ENCODE measurements at regions of chr1 and their contacts with region 1.

Region 1: GRCh38 chr1:172532700-172533509 is at the start of gene SUCO:
- DNase-seq: peak; percentile 100
- H3K4me3 Mint-ChIP-seq: peak within 1 kb of the TSS; percentile 94
- H3K27ac Mint-ChIP-seq: peak within 1 kb of the TSS; percentile 100
- H3K4me1 Mint-ChIP-seq: peaks cover 39% of the 10 kb centered on the region
- H3K27me3 Mint-ChIP-seq: no peaks in the 10 kb centered on the region
- total RNA-seq, gene SUCO: 23.9 TPM

Region 2: GRCh38 chr1:171781176-171781875 is 751.6 kb before region 1 on chr1 and contains the start of gene METTL13:
- CTCF ChIA-PET with region 1: no interaction called
- intact Hi-C with region 1: loop called (anchors 1 kb)
- DNase-seq: peak; percentile 99
- H3K4me3 Mint-ChIP-seq: peak within 1 kb of the TSS; percentile 100
- H3K27ac Mint-ChIP-seq: peak within 1 kb of the TSS; percentile 98
- H3K4me1 Mint-ChIP-seq: peaks cover 49% of the 10 kb centered on the region
- H3K27me3 Mint-ChIP-seq: no peaks in the 10 kb centered on the region
- total RNA-seq, gene METTL13: 39.5 to 40.9 TPM

Region 3: GRCh38 chr1:172443626-172444453 is 89.1 kb before region 1 on chr1 and contains the start of gene PIGC:
- CTCF ChIA-PET with region 1: interaction called, 3 read pairs
- intact Hi-C with region 1: loop called (anchors 1 kb)
- DNase-seq: peak; percentile 96
- H3K4me3 Mint-ChIP-seq: peak within 1 kb of the TSS; percentile 86
- H3K27ac Mint-ChIP-seq: peak within 1 kb of the TSS; percentile 86
- H3K4me1 Mint-ChIP-seq: peaks cover 35% of the 10 kb centered on the region
- H3K27me3 Mint-ChIP-seq: no peaks in the 10 kb centered on the region
- total RNA-seq, gene PIGC: 17.5 to 18.7 TPM

Region 4: DNA sequence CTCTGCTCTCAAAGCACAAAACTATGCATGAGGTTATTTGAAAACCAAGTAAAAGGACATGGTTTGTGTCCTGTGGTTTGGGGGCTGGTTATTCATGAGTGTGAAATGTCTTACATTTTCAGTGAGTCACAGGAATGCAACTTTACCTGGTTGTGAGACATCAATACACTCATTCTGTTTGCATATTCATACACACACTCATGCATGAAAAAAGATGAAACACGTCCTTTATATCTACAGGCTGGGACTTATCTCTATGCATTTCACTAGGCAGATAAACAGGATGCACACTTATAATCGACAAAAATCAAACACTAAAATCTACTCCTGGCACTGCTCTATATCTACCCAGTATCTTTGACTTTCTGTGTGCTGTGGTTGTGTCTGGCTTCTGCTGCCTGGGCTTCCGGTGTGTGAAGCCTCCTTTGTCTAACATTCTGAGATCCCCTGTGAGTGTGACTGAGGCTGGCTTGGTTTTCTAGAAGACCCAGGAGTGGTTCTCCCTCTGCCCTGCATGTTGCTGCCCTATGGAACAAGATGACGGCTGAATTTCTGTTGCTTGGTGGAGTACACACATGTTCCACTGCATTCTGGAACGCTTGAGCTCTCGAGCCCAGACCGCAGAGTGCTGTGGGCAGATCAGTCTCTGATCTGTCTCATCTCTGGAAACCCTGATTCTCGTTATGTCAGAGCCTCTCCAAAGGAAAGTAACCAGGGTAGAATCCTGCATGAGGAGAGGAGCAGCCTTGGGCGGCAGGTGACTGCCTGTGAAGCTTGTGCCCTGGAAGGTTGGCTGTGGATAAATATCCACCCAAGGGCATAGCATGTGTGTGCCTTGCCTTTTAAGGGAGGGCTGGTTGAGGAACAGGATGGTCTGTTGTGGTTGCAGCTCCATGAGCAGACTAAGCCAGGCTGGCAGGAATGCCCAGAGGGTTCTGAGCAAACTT is 106.3 kb after region 1 on chr1:
- CTCF ChIA-PET with region 1: no interaction called
- intact Hi-C with region 1: loop called (anchors 1 kb)
- DNase-seq: peak; percentile 90
- H3K4me3 Mint-ChIP-seq: peak overlapping the region; percentile 42
- H3K27ac Mint-ChIP-seq: peak overlapping the region; percentile 93
- H3K4me1 Mint-ChIP-seq: peaks cover 73% of the 10 kb centered on the region
- H3K27me3 Mint-ChIP-seq: peaks cover 9% of the 10 kb centered on the region

Region 5: GRCh38 chr1:172719694-172720138 is 186.8 kb after region 1 on chr1:
- CTCF ChIA-PET with region 1: interaction called, 6 read pairs
- intact Hi-C with region 1: loop called (anchors 2 kb)
- DNase-seq: no peak
- H3K4me3 Mint-ChIP-seq: no peak overlapping the region
- H3K27ac Mint-ChIP-seq: no peak overlapping the region
- H3K4me1 Mint-ChIP-seq: peaks cover 33% of the 10 kb centered on the region
- H3K27me3 Mint-ChIP-seq: peaks cover 3% of the 10 kb centered on the region

Region 6: DNA sequence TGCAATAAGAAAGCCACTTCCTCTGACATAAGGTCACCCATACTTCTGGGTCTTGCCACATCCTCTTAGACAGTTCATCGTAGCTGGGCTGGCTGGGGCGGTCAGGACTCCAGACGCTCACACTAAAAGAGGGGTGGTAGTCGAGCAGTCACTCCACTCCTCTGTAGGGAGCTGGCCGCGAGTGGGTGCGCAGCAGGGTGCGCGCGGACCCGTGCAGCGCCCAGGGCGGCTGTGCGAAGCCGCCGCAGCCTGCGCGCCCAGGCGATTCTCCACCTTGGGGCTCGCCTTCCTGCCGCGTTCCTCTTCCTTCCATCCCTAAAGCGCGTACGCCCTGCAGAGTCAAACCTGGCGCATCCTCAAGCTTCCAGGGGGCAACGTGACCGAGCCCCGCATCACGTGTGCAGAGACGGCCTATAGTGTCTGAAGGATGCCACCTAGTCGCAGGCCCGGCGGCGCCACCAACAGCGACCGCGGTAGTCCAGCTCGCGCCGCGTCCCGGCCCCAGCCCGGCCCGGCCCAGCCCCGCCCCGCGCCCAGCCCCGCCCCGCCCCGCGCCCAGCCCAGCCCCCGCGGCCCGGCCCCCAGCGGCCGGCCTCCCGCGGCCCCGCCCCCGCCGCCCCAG is 943.9 kb after region 1 on chr1:
- CTCF ChIA-PET with region 1: no interaction called
- intact Hi-C with region 1: loop called (anchors 1 kb)
- DNase-seq: peak; percentile 86
- H3K4me3 Mint-ChIP-seq: peak overlapping the region; percentile 91
- H3K27ac Mint-ChIP-seq: peak overlapping the region; percentile 93
- H3K4me1 Mint-ChIP-seq: peaks cover 58% of the 10 kb centered on the region
- H3K27me3 Mint-ChIP-seq: no peaks in the 10 kb centered on the region

Region 7: DNA sequence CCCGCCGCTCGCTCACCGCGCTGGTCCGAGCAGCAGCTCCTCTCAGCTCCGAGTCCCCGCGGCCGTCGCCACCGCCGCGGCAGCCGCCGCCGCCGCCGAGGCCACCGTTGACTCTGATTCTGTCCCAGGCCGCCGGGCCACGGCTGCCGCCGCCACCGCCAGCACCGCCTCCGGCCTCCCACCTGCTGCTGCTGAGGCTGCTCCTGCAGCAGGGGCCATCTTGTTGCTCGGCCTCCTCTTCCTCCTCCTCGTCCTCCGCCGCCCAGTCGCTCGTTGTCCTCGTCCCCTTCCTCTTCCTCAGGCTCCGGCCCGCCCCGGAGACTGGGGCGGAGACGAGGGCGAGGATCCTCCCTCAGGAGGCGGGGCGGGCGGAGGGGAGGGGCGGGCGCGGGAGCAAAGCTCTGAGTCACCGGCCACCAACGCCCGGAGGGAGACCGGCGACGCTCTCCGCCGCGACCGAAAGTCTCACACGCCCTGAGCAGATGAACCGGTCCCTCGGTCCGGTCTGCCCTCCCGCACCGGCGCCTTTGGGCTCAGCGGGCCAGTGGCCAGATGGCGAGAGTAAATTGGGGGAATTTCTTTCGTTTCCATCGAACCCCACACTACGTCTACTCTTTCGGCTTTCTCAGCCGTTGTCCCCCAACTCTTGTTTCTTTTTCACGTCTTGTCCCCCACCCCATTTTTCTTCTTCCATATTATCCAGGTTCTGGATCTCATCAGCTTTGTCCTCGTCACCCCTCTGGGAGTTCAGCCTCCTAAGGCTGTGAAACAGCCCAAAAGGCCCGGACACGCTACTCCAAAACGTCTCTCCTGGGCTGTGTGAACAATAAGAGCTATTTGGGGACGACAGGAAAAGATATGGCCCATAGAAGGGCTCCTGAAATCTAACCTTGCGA is 1489.4 kb after region 1 on chr1 and contains the start of gene RC3H1:
- CTCF ChIA-PET with region 1: no interaction called
- intact Hi-C with region 1: loop called (anchors 1 kb)
- DNase-seq: peak; percentile 92
- H3K4me3 Mint-ChIP-seq: peak within 1 kb of the TSS; percentile 93
- H3K27ac Mint-ChIP-seq: peak within 1 kb of the TSS; percentile 94
- H3K4me1 Mint-ChIP-seq: peaks cover 32% of the 10 kb centered on the region
- H3K27me3 Mint-ChIP-seq: no peaks in the 10 kb centered on the region
- total RNA-seq, gene RC3H1: 24.2 to 27.1 TPM